ENCODE measurements at regions of chr12 and their contacts with region 1.

Region 1: GRCh38 chr12:124567661-124568373 is 405 bp upstream of the NCOR2 start:
- DNase-seq: peak in 1 of 2 donors; percentile 95
- H3K4me3 ChIP-seq: peak overlapping the region; percentile 38 to 39
- H3K27ac ChIP-seq: peak overlapping the region; percentile 85
- H3K4me1 ChIP-seq: peaks cover 54% of the 10 kb centered on the region
- H3K27me3 ChIP-seq: no peaks in the 10 kb centered on the region
- CTCF ChIP-seq: no peak
- POLR2A ChIP-seq: no peak

Region 2: DNA sequence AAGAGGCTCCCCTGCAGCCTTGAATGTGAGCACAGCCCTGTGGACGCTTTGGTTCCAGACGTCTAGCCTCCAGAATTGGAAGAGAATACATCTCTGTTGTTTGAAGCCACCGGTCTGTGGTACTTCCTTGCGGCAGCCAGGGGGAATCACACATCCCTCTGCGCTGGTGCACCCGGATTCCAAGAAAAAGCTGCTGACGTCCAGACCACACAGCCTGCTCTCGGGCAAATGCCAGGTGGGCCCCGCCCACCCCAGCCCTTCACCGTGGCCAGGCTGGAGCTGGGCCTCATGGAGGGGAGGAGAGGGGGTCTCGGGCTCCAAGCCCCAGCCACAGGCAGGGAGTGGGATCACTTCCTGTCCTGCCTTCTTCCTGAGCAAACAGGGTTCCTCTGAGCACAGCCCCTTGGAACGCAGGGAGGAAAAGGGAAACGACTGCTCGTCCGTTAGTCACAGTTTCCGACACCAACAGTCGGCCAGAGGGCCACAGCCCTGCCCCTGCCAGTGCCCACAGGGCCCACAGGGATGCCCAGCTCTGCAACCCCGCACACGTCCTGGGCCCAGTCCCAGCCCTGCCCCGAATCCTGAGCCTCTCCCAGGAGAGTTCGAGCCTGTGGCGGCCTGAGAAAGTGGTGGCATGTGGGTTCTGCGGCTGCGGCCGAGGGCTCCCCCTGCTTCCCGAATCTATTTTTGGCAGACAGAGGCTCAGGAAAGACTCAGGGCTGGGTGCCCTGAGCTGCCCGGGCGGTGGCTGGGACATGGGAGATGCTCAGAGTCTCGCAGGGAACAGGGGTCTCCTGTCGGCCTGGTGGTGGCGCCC is 187.7 kb before region 1 on chr12:
- intact Hi-C with region 1: loop called (anchors 2 kb)
- DNase-seq: peak in 1 of 2 donors; percentile 95
- H3K4me3 ChIP-seq: peak overlapping the region in 1 of 2 donors; percentile 1
- H3K27ac ChIP-seq: peak overlapping the region; percentile 84
- H3K4me1 ChIP-seq: peaks cover 52% of the 10 kb centered on the region
- H3K27me3 ChIP-seq: no peaks in the 10 kb centered on the region
- CTCF ChIP-seq: peak; percentile 15 to 77 (median 33)
- POLR2A ChIP-seq: no peak

Region 3: GRCh38 chr12:124518051-124518932 is 49.5 kb before region 1 on chr12:
- intact Hi-C with region 1: loop called (anchors 5 kb)
- DNase-seq: peak in 1 of 2 donors; percentile 99
- H3K4me3 ChIP-seq: peak overlapping the region; percentile 43 to 52
- H3K27ac ChIP-seq: peak overlapping the region; percentile 96
- H3K4me1 ChIP-seq: peaks cover 92% of the 10 kb centered on the region
- H3K27me3 ChIP-seq: no peaks in the 10 kb centered on the region
- CTCF ChIP-seq: no peak
- POLR2A ChIP-seq: peak in 1 of 2 donors; percentile 10

Measured in vagina (tissue), 2 donors.